ENCODE measurements at regions of chr5 and their contacts with region 1.

Region 1: GRCh38 chr5:317086-317811 is 4.3 kb upstream of the AHRR start:
- DNase-seq: peak; percentile 53
- ATAC-seq: peak; percentile 87
- H3K4me3 ChIP-seq: no peak overlapping the region
- H3K27ac ChIP-seq: no peak overlapping the region
- H3K4me1 ChIP-seq: peaks cover 19% of the 10 kb centered on the region
- H3K27me3 ChIP-seq: peaks cover 2 to 22% of the 10 kb centered on the region in 2 experiments; a peak in 4 of 5 replicates
- CTCF ChIP-seq: peak; percentile 93
- EP300 ChIP-seq: no peak
- POLR2A ChIP-seq: no peak
- RAD21 ChIP-seq: peak; percentile 89

Region 2: DNA sequence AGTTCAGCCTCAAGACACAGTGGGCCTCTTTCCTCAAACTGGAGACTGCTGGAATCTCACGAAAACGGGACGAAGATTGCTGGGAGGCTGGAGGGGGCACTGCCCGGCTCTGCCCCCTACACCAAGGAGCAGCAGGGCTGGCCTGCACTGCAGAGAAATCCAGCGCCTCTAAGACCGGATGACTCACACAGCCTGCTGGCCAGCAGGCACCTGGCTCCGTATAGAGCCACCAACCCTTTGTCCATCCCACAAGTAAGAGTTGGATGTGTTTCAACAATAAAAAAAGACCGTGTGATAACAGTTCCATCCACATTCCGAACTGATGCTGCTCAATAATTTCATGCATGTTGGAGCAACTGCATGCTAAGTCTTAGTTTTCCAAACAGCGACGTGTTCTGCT is 110.8 kb before region 1 on chr5:
- CTCF ChIA-PET with region 1: no interaction called
- POLR2A ChIA-PET with region 1: no interaction called
- in situ Hi-C with region 1: no loop called
- intact Hi-C with region 1: no loop called
- DNase-seq: no peak
- ATAC-seq: no peak
- H3K4me3 ChIP-seq: no peak overlapping the region
- H3K27ac ChIP-seq: no peak overlapping the region
- H3K4me1 ChIP-seq: no peaks in the 10 kb centered on the region
- H3K27me3 ChIP-seq: no peaks in the 10 kb centered on the region
- CTCF ChIP-seq: no peak
- EP300 ChIP-seq: no peak
- POLR2A ChIP-seq: no peak
- RAD21 ChIP-seq: no peak

Region 3: GRCh38 chr5:431001-431710 is 113.9 kb after region 1 on chr5:
- CTCF ChIA-PET with region 1: interaction called, 3 read pairs
- POLR2A ChIA-PET with region 1: no interaction called
- in situ Hi-C with region 1: loop called (anchors 5 kb)
- intact Hi-C with region 1: loop called (anchors 5 kb)
- DNase-seq: peak; percentile 41
- ATAC-seq: peak; percentile 98
- H3K4me3 ChIP-seq: no peak overlapping the region
- H3K27ac ChIP-seq: no peak overlapping the region
- H3K4me1 ChIP-seq: peaks cover 10% of the 10 kb centered on the region
- H3K27me3 ChIP-seq: no peaks in the 10 kb centered on the region
- CTCF ChIP-seq: peak; percentile 94
- EP300 ChIP-seq: no peak
- POLR2A ChIP-seq: no peak
- RAD21 ChIP-seq: peak; percentile 88

Measured in HepG2 (cell line).